ENCODE measurements at regions of chr4 and their contacts with region 1.

Region 1: DNA sequence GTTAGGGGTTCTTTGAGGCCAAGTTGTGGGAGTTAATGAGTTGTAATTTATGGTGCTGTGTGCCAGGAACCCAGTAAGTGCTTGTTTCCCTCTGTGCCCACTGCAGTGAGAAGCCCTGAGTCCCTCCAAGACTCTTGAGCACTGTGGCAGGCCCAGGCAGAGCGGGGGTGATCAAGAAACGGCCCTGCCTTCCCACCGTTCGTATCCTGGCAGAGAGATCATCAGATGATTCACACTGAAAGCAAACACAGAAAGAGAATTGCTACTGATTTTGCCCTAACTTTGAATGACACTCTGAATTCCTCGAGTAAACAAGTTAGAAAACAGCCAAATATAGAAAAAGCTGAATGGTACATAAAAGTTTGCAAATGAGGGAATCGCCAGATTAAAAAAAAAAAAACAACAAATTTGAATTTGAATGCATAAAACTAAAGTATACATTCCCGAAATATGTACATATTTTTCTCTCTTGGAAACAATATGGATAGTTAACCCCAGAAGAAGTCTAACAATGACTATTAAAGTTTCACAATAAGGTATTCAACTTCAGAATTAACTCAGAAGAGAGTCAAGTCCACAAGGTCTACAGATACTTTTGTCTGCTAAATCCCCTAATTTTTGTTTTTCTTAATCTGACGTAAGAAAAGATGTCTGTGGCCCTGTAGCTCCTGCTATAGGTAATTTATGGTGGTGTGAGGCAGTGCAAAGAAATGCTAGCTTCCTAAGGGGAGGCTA is 71.8 kb downstream of the AFAP1 start:
- DNase-seq: peak; percentile 56
- ATAC-seq: peak; percentile 83
- H3K4me3 ChIP-seq: no peak overlapping the region
- H3K27ac ChIP-seq: peak overlapping the region; percentile 83
- H3K4me1 ChIP-seq: peaks cover 36% of the 10 kb centered on the region
- H3K27me3 ChIP-seq: no peaks in the 10 kb centered on the region
- CTCF ChIP-seq: no peak

Region 2: DNA sequence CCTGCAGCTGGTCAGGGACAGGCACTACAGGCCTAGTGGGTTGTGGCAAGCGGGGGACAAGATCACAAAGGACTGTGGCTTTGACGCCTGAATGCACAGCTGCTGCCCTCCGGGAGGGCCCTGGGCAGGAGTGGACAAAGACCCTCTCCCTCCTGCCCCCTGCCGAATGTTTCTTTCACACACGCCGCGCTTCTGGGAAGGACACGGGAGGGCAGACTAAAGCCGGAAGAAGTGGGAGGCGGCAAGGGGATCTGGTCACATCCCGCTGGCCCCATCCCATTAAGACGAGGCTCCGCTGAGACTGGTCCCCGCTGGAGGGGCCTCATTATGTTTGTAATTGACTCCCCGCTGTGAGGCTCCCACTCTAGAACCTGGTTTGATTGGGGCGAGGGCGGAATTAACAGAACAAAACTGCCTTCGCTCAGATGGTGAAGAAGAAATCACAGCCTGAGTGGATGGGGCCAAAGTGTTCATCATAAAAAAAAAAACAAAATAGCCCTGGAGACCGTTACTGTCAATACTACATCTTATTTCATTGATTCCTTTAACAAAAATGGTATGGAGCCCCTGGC is 395.3 kb before region 1 on chr4:
- CTCF ChIA-PET with region 1: no interaction called
- POLR2A ChIA-PET with region 1: no interaction called
- intact Hi-C with region 1: no loop called
- DNase-seq: no peak
- ATAC-seq: no peak
- H3K4me3 ChIP-seq: no peak overlapping the region
- H3K27ac ChIP-seq: no peak overlapping the region
- H3K4me1 ChIP-seq: no peaks in the 10 kb centered on the region
- H3K27me3 ChIP-seq: no peaks in the 10 kb centered on the region
- CTCF ChIP-seq: no peak

Region 3: GRCh38 chr4:7973545-7973981 is 105.7 kb after region 1 on chr4:
- CTCF ChIA-PET with region 1: interaction called, 10 read pairs
- POLR2A ChIA-PET with region 1: no interaction called
- intact Hi-C with region 1: no loop called
- DNase-seq: peak; percentile 85
- ATAC-seq: peak; percentile 40
- H3K4me3 ChIP-seq: no peak overlapping the region
- H3K27ac ChIP-seq: peak overlapping the region; percentile 100
- H3K4me1 ChIP-seq: peaks cover 57% of the 10 kb centered on the region
- H3K27me3 ChIP-seq: no peaks in the 10 kb centered on the region
- CTCF ChIP-seq: no peak

Measured in PC-3 (cell line).